ENCODE measurements at regions of chr11 and their contacts with region 1.

Region 1: DNA sequence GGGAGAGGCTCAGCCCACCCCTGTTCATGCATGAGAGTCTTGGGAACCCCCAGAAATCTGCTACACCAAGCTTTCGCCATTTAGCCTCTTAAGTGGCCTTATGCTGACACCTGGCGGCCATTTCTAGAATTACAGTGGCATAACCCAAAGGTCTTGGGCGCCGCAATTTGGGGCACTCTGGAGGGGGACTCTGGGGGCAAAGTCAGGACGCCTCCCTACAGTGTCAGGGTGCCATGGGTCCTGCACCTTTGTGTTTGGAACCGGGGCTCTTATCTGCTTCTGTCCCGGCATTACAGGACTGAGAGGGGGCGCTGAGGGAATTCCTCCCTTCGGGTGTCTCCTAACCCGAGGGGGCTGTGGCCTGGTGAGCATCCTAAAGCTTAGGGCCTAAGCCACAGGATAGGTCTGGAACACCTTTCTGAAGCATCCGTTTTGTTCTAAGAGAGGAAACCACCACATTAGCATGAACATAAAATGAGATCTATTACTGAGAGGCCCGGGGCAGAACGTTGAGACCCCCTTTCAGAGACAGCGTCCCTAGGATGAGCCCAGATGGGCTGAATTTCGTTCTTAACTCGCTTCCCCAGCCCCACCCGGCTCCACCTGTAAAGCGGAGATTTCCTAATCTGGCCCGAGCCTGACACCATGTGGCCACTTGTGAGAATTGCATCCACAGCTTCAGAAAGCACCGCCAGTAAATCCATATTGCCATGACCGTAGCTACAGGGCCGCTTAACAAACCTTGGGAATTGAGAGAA is 9.3 kb downstream of the INS start:
- DNase-seq: peak; percentile 68
- ATAC-seq: peak; percentile 87
- H3K4me3 Mint-ChIP-seq: peak overlapping the region; percentile 15
- H3K27ac Mint-ChIP-seq: no peak overlapping the region
- H3K4me1 Mint-ChIP-seq: peaks cover 12% of the 10 kb centered on the region
- H3K27me3 Mint-ChIP-seq: peaks cover 35% of the 10 kb centered on the region
- CTCF ChIP-seq: peak; percentile 79

Region 2: DNA sequence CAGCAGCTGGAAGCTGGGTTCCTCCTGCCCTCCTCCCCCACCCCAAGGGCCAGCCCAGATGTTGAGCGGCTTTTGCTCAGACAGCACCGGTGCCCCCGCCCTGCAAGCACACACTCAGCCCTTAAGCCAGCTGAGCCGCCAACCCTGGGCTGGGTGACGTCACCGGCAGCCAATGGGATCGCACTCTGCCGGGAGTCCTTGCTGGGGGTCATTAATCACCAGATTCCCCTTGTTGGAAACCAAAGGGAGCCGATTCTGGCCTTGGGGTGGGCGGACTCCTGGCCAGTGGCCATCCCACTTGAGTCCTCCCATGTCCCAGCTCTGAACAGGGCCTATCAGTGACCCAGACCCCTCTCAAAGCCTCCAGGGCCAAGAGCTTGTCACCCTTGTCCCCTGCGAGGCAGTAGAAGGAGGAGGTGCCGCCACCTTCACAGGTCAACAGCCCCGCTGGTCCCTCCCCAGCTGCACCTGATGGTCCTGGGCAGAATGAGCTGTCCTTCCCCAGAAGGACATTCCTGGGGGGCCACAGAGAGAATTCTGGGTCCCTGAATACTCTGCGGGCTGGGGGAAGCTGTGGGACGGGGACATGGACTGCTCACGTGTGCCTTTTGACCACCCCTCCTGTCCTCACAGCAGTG is 587.0 kb before region 1 on chr11:
- CTCF ChIA-PET with region 1: no interaction called
- POLR2A ChIA-PET with region 1: no interaction called
- intact Hi-C with region 1: no loop called
- DNase-seq: no peak
- ATAC-seq: no peak
- H3K4me3 Mint-ChIP-seq: no peak overlapping the region
- H3K27ac Mint-ChIP-seq: no peak overlapping the region
- H3K4me1 Mint-ChIP-seq: no peaks in the 10 kb centered on the region
- H3K27me3 Mint-ChIP-seq: peaks cover 15% of the 10 kb centered on the region
- CTCF ChIP-seq: no peak

Region 3: DNA sequence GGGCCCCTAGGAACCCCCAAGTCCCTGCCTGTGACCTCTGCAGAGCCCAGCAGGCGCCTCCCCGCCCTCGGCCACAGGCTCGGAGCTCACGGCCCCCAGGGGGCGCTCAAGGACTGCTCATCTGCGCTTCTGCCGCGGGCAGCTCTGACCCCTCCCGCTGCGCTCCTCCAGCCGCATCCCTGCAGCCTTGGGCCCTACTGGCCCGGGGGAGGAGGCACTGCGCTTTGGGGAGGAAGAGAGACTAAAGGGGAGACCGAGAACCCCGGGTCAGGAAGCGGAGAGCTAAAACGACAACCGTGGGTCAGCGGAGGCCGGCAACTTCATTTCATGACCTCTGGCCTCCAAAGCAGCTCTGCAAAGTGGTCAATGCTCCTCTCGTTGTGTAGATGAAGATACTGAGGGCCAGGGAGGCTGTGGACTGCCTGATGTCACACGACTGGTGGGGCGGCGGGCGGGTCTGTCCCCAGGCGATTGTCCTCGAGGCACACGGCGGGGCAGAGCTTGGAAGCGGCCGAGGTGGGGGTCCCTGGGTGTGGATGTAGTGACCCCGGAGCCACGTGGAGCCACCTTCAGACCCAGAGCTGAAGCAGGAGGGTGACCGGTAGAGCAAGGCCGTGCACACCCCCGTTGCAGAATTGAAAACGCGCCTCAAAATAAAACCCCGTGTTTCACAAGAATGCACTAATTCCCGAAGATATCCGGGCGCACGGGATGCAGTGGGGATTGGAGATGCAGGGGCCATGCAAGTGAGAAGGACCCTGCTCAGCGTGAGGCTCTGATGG is 457.4 kb before region 1 on chr11:
- CTCF ChIA-PET with region 1: interaction called, 132 read pairs
- POLR2A ChIA-PET with region 1: interaction called, 7 read pairs
- intact Hi-C with region 1: loop called (anchors 1 kb)
- DNase-seq: peak; percentile 81
- ATAC-seq: peak; percentile 91
- H3K4me3 Mint-ChIP-seq: no peak overlapping the region
- H3K27ac Mint-ChIP-seq: no peak overlapping the region
- H3K4me1 Mint-ChIP-seq: peaks cover 5% of the 10 kb centered on the region
- H3K27me3 Mint-ChIP-seq: peaks cover 22% of the 10 kb centered on the region
- CTCF ChIP-seq: no peak

Region 4: DNA sequence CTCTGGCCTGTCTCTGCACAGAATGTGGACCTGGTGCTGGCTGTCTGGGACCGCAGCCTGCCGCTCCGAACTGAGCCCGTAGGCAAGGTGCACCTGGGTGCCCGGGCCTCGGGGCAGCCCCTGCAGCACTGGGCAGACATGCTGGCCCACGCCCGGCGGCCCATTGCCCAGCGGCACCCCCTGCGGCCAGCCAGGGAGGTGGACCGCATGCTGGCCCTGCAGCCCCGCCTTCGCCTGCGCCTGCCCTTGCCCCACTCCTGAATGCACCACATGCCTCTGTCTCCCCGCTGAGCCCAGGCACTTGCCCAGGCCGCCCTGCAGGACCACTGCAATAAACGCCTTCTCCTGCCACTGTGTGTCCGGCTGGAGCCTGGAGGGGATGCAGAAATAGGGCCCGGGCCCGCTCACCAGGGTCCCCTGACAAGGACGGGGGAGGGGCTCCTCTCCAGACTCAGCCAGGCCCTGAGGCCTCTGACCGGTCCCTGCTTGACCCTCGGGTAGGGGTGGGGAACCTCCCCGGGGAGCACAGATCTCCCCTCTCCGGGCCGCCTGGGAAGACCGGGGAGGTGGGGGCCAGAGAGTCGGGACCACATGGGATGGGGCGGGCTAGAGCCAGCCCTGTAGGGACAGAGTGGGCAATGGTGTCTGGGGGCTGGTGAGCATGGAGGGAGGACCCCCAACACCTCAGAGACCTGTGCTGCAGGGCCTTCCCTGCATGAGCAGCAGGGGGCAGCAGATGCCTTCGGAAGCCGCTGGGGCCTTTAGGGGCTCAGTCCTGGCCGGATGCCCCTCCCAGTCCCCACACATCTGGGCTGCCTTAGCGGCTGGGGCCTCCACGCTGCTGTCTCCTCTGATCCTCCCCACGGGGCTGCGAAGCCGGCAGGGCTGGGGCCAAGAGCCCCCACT is 314.3 kb before region 1 on chr11:
- CTCF ChIA-PET with region 1: interaction called, 28 read pairs
- POLR2A ChIA-PET with region 1: no interaction called
- intact Hi-C with region 1: loop called (anchors 1 kb)
- DNase-seq: peak; percentile 76
- ATAC-seq: peak; percentile 80
- H3K4me3 Mint-ChIP-seq: no peak overlapping the region
- H3K27ac Mint-ChIP-seq: no peak overlapping the region
- H3K4me1 Mint-ChIP-seq: peaks cover 29% of the 10 kb centered on the region
- H3K27me3 Mint-ChIP-seq: peaks cover 3% of the 10 kb centered on the region
- CTCF ChIP-seq: peak; percentile 83

Region 5: GRCh38 chr11:1953489-1954266 is 198.0 kb before region 1 on chr11:
- CTCF ChIA-PET with region 1: interaction called, 10 read pairs
- POLR2A ChIA-PET with region 1: no interaction called
- intact Hi-C with region 1: no loop called
- DNase-seq: no peak
- ATAC-seq: peak; percentile 71
- H3K4me3 Mint-ChIP-seq: no peak overlapping the region
- H3K27ac Mint-ChIP-seq: no peak overlapping the region
- H3K4me1 Mint-ChIP-seq: no peaks in the 10 kb centered on the region
- H3K27me3 Mint-ChIP-seq: no peaks in the 10 kb centered on the region
- CTCF ChIP-seq: no peak

Region 6: DNA sequence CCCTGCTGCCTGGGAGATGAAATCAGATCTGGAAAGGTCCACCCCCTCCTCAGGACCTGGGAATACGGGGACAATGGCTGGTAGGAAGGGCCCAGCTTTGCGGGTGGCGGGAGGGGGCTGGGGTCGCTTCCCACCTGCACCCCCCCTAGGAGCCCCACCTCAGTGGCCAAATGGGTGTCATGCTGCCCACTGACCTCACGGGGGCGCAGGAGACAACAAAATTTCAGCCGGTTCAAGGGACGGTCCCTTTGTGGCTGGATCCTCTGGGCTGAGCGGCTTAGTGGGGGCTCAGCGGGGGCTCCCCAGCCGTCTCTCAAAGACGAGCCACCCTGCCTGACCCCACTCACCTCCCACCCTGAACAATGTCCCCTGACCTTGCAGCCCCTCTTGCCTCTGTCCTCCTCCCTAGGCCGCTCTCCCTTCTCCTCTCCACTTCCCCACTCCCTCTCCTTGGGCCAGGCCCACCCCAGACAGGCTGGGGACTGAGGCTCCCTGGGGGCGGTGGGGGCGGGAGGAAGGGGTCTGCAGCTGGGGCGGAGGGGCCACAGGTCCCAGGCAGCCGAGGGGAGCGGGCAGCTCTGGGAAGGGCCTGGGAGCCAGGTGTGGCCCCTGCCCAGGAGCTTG is 114.7 kb before region 1 on chr11:
- CTCF ChIA-PET with region 1: interaction called, 184 read pairs
- POLR2A ChIA-PET with region 1: interaction called, 14 read pairs
- intact Hi-C with region 1: no loop called
- DNase-seq: no peak
- ATAC-seq: peak; percentile 62
- H3K4me3 Mint-ChIP-seq: no peak overlapping the region
- H3K27ac Mint-ChIP-seq: no peak overlapping the region
- H3K4me1 Mint-ChIP-seq: no peaks in the 10 kb centered on the region
- H3K27me3 Mint-ChIP-seq: no peaks in the 10 kb centered on the region
- CTCF ChIP-seq: no peak

Region 7: DNA sequence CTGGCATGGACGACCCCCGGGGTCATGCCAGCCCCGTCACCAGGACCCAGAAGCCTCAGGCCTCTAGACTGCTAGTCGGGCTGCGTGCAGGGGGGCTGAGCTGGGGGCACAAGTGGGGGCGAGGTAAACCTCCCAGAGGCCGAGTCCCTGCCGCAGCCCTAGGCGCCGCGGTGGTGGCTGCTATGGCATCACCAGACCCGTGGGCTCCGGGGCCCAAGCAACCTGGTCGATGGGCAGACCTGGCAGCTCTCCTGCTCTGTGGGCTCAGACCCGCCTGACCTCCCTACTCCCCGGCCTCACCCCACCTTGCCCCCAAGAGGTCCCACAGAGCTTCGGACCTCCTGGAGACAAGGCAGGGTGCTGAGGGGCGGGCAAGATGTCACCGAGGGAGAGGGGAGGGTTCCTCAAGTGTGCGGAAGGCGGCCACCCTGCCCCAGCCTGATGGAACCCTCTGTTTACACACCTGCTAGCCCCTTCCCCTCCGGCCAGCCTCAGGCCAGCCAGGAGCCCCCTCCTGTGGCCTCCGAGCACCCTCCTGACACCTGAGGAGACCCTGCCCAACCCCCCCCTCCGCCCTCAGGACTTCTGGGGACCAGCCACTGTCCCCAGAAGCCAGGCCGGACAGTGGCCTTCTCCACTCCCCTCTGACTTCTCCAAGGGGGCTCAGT is 21.8 kb before region 1 on chr11:
- CTCF ChIA-PET with region 1: no interaction called
- POLR2A ChIA-PET with region 1: no interaction called
- intact Hi-C with region 1: no loop called
- DNase-seq: no peak
- ATAC-seq: no peak
- H3K4me3 Mint-ChIP-seq: no peak overlapping the region
- H3K27ac Mint-ChIP-seq: no peak overlapping the region
- H3K4me1 Mint-ChIP-seq: no peaks in the 10 kb centered on the region
- H3K27me3 Mint-ChIP-seq: peaks cover 17% of the 10 kb centered on the region
- CTCF ChIP-seq: no peak

Region 8: GRCh38 chr11:2196970-2197770 is 45.5 kb after region 1 on chr11:
- CTCF ChIA-PET with region 1: no interaction called
- POLR2A ChIA-PET with region 1: no interaction called
- intact Hi-C with region 1: no loop called
- DNase-seq: peak; percentile 61
- ATAC-seq: peak; percentile 97
- H3K4me3 Mint-ChIP-seq: no peak overlapping the region
- H3K27ac Mint-ChIP-seq: peak overlapping the region; percentile 9
- H3K4me1 Mint-ChIP-seq: peaks cover 6% of the 10 kb centered on the region
- H3K27me3 Mint-ChIP-seq: peaks cover 10% of the 10 kb centered on the region
- CTCF ChIP-seq: peak; percentile 31

Region 9: DNA sequence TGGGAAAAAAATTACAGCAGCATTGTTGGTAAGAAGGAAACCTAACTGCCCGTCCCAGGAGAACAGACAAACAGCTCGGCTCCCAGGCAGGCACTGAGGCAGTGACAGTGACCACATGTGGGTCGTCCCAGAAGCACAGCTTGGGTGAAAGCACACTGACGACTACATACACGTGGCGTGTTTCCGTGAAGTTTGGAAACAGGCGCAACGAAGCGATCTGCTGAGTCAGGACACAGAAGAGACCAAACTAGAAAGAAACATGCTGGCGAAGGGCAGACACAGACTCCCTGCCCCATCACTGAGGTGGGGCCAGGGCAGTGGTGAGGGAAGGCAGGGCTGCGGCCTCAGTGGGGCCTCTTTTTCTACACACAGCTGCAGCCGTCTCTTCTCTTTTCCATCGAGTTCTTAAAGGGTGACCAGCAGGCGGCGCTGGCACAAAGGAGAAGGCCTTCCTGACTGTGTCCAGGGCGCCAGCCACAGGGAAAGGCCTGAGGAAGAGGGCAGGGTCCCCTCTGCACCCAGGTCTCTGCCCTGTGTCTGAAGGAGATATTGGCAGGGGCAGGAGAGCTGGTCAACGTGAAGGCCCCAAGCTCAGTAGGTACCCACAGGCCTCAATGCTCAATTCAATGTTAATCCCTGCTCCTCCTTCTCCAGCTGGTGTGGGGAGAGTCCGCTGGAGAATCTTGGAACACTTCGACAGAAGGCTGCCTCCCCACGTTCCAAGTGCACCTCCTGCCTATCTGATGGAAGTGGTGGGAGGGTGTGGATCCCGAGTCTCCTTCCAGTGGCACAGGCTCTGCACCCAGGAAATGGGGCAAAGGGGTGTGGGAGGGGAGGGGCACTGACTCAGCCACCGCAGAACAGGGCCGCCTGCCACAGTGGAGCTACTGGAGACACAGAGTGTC is 885.6 kb after region 1 on chr11:
- CTCF ChIA-PET with region 1: no interaction called
- POLR2A ChIA-PET with region 1: no interaction called
- intact Hi-C with region 1: no loop called
- DNase-seq: peak; percentile 40
- ATAC-seq: peak; percentile 48
- H3K4me3 Mint-ChIP-seq: no peak overlapping the region
- H3K27ac Mint-ChIP-seq: peak overlapping the region; percentile 70
- H3K4me1 Mint-ChIP-seq: peaks cover 32% of the 10 kb centered on the region
- H3K27me3 Mint-ChIP-seq: no peaks in the 10 kb centered on the region
- CTCF ChIP-seq: no peak

Measured in activated B cell treated with CpG ODN at 0.5 μM for 24 hours (primary cell).